Activated CD4-positive, alpha-beta T cell treated with anti-CD3 and anti-CD28 coated beads, Interleukin-2, amount 10 ng/mL, durations not matched to agents 24 days and 14 days (primary cell): ENCODE measurements at regions of chr2 and their contacts with region 1.

Region 1: GRCh38 chr2:27428213-27428977 is at the start of gene NRBP1:
- DNase-seq: peak; percentile 99
- H3K4me3 Mint-ChIP-seq: peak within 1 kb of the TSS; percentile 97
- H3K27ac Mint-ChIP-seq: peak within 1 kb of the TSS; percentile 99
- H3K4me1 Mint-ChIP-seq: peaks cover 28% of the 10 kb centered on the region
- H3K27me3 Mint-ChIP-seq: peaks cover 2% of the 10 kb centered on the region
- total RNA-seq, gene NRBP1: 93.9 and 94.7 TPM in 2 replicates

Region 2: DNA sequence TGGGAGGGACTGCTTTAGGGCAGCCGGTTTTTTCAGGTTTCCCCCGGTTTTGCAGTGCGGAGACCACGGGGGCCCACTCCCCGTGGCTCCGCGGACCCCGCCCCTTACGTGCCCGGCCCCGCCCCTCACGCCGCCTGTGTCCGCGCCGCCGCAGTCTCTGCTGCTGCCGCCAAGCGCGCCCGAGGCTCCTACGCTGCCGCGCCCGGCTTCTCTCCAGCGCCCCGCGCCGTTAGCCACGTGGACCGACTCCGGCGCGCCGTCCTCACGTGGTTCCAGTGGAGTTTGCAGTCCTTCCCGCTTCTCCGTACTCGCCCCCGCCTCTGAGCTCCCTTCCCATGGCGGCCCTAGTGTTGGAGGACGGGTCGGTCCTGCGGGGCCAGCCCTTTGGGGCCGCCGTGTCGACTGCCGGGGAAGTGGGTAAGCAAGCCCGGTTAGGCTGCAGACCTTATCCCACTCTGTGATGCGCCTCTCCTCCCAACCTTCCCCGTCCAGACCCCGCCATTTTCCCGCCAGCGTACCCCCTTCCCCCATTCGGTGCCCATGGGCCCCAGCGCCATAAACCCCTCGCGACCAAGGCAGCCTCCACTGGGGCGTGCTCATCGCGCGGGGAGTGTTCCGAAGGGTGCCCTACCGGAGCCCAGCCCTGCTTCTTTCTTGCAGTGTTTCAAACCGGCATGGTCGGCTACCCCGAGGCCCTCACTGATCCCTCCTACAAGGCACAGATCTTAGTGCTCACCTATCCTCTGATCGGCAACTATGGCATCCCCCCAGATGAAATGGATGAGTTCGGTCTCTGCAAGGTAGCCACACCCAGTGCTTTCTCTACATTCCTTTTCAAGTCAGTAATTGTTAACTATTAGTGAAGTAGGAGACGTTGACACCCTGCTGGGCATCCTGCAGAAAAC is 210.9 kb before region 1 on chr2 and contains the start of gene CAD:
- intact Hi-C with region 1: loop called (anchors 5 kb)
- DNase-seq: peak; percentile 96
- H3K4me3 Mint-ChIP-seq: peak within 1 kb of the TSS; percentile 98
- H3K27ac Mint-ChIP-seq: peak within 1 kb of the TSS; percentile 98
- H3K4me1 Mint-ChIP-seq: peaks cover 38% of the 10 kb centered on the region
- H3K27me3 Mint-ChIP-seq: no peaks in the 10 kb centered on the region
- total RNA-seq, gene CAD: 144 and 159 TPM in 2 replicates

Region 3: DNA sequence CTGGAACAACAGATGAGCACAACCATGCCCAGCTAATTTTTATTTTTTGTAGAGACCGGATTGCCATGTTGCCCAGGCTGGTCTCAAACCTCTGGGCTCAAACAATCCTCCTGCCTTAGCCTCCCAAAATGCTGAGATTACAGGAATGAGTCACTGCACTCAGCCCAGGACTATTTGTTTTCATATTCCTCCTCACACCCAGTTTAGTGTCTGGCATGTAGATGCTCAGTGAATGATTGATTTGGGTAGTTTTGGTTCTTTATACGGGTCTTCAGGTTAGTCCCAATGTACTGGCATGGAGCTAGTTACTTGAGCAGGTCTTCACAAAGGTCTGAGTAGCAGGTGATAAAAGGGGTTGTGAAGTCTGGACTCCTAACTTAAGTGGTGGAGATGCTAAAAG is 64.5 kb before region 1 on chr2:
- intact Hi-C with region 1: no loop called
- DNase-seq: no peak
- H3K4me3 Mint-ChIP-seq: no peak overlapping the region
- H3K27ac Mint-ChIP-seq: peak overlapping the region; percentile 62
- H3K4me1 Mint-ChIP-seq: peaks cover 16% of the 10 kb centered on the region
- H3K27me3 Mint-ChIP-seq: no peaks in the 10 kb centered on the region

Region 4: GRCh38 chr2:27380626-27381545 is 47.5 kb before region 1 on chr2 and contains the start of gene ZNF513:
- intact Hi-C with region 1: loop called (anchors 2 kb)
- DNase-seq: peak; percentile 97
- H3K4me3 Mint-ChIP-seq: peak within 1 kb of the TSS; percentile 95
- H3K27ac Mint-ChIP-seq: peak within 1 kb of the TSS; percentile 97
- H3K4me1 Mint-ChIP-seq: peaks cover 30% of the 10 kb centered on the region
- H3K27me3 Mint-ChIP-seq: no peaks in the 10 kb centered on the region
- total RNA-seq, gene ZNF513: 11.1 and 13.5 TPM in 2 replicates

Region 5: GRCh38 chr2:27409321-27410073 is 18.9 kb before region 1 on chr2 and contains the start of gene PPM1G:
- intact Hi-C with region 1: loop called (anchors 1 kb)
- DNase-seq: peak; percentile 99
- H3K4me3 Mint-ChIP-seq: peak within 1 kb of the TSS; percentile 98
- H3K27ac Mint-ChIP-seq: peak within 1 kb of the TSS; percentile 89
- H3K4me1 Mint-ChIP-seq: peaks cover 30% of the 10 kb centered on the region
- H3K27me3 Mint-ChIP-seq: peaks cover 5% of the 10 kb centered on the region
- total RNA-seq, gene PPM1G: 165 and 167 TPM in 2 replicates

Region 6: DNA sequence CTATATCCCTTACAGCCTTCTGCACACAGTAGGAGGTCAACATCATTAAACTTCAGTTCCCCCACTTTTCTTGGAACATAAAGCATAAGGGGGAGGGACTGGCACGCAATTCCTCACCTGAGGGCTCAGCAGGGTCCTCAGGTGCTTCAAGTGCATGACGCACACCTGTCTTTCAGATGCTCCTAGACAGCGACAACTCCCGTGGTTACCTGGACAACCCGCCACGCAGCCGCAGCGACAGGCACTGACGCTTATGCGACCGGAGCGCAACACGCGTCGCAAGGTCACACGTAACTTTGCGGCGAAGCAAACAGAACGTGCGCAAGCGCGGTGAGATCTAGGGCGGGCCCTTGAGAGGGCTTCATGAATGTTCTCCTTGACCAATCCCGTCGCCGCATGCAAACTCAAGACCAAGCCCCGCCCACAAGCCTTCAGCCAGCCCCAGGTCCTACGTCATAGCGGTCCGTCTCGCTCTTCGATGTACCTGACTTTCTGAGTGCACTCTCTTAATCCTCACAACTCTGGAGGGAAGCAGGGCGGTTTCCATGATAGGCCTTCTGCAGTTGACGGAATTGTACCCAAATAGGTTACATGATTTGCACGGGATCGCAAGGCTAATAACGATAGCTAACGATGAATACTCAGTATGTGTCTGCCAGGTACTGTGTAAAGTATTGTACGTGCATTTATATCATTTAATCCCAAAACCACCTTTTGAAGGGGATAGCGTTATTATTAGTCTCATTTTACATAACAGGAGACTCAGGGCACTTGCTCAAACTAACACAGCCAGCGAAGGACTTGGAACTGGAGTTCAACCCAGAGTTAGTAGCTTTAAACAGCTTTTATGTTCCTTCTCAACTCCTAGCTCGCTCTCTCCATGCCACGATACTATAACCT is 61.4 kb after region 1 on chr2 and contains the start of gene IFT172:
- intact Hi-C with region 1: loop called (anchors 1 kb)
- DNase-seq: peak; percentile 100
- H3K4me3 Mint-ChIP-seq: peak within 1 kb of the TSS; percentile 84
- H3K27ac Mint-ChIP-seq: peak within 1 kb of the TSS; percentile 87
- H3K4me1 Mint-ChIP-seq: peaks cover 20% of the 10 kb centered on the region
- H3K27me3 Mint-ChIP-seq: peaks cover 18% of the 10 kb centered on the region
- total RNA-seq, gene IFT172: 12.4 and 12.9 TPM in 2 replicates

Region 7: DNA sequence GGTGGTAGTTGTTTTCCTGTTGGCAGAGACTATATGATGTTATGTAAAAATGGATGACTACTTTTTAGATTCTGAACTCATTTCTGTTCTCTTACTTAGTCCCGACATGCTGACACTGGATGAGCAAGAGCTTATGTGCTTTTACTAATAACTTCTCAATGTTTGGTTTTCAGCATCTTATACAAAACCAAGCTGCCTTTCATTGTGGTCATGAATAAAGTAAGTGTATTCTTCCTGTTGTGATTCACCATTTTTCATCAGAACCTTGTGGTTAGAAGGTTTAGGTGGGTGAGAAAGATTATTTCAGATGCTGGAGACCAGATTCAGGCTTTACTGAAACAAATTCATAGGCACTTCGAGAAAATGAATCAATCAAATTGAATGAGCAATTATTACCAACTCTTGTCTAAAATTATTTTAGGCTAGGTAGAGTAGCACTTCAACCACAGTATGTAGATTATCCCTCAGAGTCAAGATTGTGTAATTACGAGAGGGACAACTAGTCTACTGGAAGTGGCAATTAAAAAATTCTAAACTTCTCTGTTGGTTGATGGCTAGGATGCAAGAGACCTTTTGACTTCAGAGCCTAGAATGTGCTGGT is 209.7 kb after region 1 on chr2:
- intact Hi-C with region 1: loop called (anchors 2 kb)
- DNase-seq: peak; percentile 64
- H3K4me3 Mint-ChIP-seq: peak overlapping the region; percentile 72
- H3K27ac Mint-ChIP-seq: peak overlapping the region; percentile 93
- H3K4me1 Mint-ChIP-seq: peaks cover 19% of the 10 kb centered on the region
- H3K27me3 Mint-ChIP-seq: no peaks in the 10 kb centered on the region

Region 8: DNA sequence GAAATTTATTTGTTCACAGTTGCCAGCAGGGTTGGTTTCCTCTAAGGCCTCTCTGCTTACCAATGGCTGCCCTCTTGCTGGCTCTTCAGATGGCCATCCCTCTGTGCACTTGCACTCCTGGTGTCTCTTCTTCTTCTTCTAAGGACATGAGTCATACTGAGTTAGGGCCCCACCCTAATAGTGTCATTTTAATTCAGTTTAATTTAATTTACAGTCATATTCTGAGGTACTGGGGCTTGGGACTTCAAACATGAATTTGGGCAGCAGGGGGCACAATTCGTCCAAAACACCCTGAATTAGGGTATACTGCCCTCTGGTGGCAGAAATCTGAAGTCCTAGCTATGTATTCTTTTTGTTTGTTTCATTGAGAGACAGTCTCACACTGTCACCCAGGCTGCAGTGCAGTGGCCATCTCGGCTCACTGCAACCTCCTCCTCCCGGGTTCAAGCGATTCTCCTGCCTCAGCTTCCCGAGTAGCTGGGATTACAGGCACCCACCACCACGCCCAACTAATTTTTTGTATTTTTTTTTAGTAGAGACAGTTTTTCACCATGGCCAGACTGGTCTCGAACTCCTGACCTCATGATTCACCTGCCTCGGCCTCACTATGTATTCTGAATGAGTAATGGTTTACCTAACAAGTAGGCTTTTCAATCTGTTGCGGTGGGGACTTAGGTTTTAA is 255.1 kb after region 1 on chr2:
- intact Hi-C with region 1: loop called (anchors 5 kb)
- DNase-seq: peak; percentile 97
- H3K4me3 Mint-ChIP-seq: no peak overlapping the region
- H3K27ac Mint-ChIP-seq: peak overlapping the region; percentile 79
- H3K4me1 Mint-ChIP-seq: peaks cover 26% of the 10 kb centered on the region
- H3K27me3 Mint-ChIP-seq: no peaks in the 10 kb centered on the region